Tibial artery (tissue), 4 donors: ENCODE measurements at regions of chr19 and their contacts with region 1.

Region 1: DNA sequence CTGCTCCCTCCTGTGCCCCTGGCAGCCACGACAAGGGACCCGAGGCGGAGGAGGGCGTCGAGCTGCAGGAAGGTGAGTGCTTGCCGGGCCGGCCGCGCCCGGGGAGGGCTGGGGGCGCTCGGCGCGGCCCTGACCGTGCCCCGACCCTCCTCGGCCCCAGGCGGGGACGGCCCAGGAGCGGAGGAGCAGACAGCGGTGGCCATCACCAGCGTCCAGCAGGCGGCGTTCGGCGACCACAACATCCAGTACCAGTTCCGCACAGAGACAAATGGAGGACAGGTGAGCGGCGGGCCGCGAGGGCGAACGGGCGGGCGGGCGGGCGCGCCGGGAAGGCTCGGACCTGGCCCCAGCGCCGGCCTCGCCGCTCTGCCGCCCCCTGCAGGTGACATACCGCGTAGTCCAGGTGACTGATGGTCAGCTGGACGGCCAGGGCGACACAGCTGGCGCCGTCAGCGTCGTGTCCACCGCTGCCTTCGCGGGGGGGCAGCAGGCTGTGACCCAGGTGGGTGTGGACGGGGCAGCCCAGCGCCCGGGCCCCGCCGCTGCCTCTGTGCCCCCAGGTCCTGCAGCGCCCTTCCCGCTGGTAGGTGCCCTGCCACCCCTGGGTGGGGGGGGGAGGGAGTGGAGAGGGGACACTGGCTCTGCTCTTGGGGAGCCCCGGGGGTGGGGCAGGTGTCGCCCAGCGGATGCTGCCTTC is 807 bp downstream of the USF2 start:
- DNase-seq: peak; percentile 85 to 92
- H3K4me3 ChIP-seq: peak overlapping the region; percentile 74 to 89
- H3K27ac ChIP-seq: peak overlapping the region; percentile 93 to 98
- H3K4me1 ChIP-seq: peaks cover 0 to 37% (median 20%) of the 10 kb centered on the region in 4 donors
- H3K27me3 ChIP-seq: no peaks in the 10 kb centered on the region
- CTCF ChIP-seq: peak; percentile 55 to 66

Region 2: DNA sequence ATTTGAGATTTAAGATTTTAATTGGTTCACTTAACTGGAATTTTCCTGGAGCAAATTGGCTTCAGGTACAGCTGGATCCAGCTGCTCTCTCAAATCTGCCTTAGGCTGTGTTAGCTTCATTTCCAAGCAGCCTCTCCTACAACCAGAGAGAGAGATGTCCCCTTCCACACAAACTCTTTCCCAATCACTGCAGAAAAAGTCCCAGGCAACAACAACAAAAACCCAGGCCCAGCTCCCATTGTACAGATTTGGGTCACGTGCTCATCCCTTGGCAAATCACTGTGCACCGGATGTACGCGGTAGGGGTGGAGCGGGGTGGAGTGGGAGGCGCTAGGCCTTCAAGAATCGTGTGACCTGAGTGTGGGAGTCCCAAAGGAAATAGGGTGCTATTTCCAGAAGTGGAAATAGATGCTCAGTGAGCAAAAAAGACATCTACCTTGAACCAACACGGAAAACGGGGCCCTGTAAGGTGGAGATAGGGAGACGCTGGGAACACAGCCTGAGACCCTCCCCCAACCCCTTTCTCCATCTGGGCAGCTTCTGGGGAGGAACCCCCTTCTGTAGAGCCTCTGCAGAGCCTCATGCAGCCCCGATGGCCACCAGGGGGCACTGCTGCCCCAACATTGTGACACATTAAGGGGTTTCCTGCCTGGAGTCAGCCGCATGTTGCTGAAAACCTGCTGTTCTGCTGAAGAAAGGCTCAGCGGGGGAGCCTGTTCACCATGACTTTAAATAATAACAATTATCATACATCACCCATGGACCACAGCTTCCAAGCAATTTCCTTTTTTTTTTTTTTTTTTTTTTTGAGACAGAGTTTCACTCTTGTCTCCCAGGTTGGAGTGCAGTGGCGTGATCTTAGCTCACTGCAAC is 202.6 kb before region 1 on chr19:
- intact Hi-C with region 1: loop called (anchors 10 kb)
- DNase-seq: peak; percentile 88 to 89
- H3K4me3 ChIP-seq: no peak overlapping the region
- H3K27ac ChIP-seq: no peak overlapping the region
- H3K4me1 ChIP-seq: no peaks in the 10 kb centered on the region
- H3K27me3 ChIP-seq: peaks cover 0 to 19% of the 10 kb centered on the region in 2 donors
- CTCF ChIP-seq: peak; percentile 83 to 85

Region 3: GRCh38 chr19:35135389-35135909 is 134.1 kb before region 1 on chr19:
- intact Hi-C with region 1: loop called (anchors 5 kb)
- DNase-seq: peak; percentile 78 to 90
- H3K4me3 ChIP-seq: peak overlapping the region; percentile 44 to 62
- H3K27ac ChIP-seq: peak overlapping the region; percentile 90 to 91
- H3K4me1 ChIP-seq: peaks cover 0 to 54% (median 40%) of the 10 kb centered on the region in 4 donors
- H3K27me3 ChIP-seq: no peaks in the 10 kb centered on the region
- CTCF ChIP-seq: peak; percentile 92 to 95

Region 4: DNA sequence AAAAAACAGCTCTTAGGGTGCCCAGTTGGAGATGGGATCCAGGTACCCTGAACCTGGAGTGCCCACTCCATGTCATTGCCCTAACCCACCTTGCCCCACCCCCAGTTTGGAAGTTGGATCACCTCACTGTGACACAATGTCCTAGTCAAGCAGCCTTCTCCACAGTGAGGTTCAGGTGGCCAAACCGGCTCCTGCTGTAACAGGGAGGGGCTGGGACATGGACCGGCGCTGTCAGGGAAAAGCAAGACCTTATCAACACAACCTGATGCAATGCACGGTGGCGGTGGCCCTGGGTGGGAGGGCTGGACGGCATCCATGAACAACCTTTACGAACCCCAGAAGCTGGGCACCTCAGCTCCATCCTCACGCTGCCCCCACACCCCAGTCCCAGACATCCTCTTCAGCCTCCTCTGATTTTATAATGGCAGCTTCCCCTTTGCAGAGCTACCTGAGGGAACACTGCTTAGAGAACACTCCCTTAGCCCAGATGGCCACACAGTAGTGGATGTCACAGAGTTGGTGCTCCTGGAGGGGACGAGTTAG is 222.3 kb after region 1 on chr19:
- intact Hi-C with region 1: loop called (anchors 5 kb)
- DNase-seq: peak in 1 of 2 donors; percentile 64
- H3K4me3 ChIP-seq: no peak overlapping the region
- H3K27ac ChIP-seq: no peak overlapping the region
- H3K4me1 ChIP-seq: peaks cover 0 to 9% (median 4%) of the 10 kb centered on the region in 4 donors
- H3K27me3 ChIP-seq: peaks cover 0 to 43% of the 10 kb centered on the region in 2 donors
- CTCF ChIP-seq: no peak